ENCODE measurements at regions of chr5 and their contacts with region 1.

Region 1: DNA sequence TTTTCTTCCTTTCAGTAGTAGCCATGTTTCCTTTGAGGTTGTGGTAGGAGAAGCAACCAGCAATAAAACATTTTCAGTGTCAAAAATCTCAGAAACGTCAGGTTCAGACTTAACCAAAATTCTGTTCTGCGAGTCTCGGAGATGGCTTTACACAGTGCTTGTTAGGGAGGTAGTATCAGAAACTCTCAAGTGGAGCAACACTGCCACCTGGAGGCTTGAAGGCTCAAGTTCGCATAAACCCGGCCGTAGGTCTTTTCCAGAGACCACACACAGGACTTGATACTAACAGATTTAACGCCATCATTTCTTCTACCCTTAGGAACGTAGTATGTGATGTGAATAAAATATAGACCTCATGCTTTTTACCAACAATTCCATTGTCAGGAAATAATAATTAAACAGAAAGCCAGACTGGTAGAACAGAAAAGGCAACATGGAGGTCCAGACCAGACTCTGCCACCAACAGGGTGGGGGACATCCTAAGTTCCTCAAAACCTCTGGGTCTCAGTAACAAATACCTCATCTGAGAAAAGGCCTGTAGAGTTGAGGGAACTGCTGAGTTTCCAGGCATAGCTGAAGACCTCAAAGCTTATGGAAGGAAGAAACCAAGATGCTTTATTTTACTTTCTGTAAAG is 8.5 kb downstream of the PTGER4 start:
- DNase-seq: peak; percentile 78
- H3K4me3 ChIP-seq: peak overlapping the region; percentile 95
- H3K27ac ChIP-seq: peak overlapping the region; percentile 93
- H3K4me1 ChIP-seq: peaks cover 57% of the 10 kb centered on the region
- H3K27me3 ChIP-seq: peaks cover 17% of the 10 kb centered on the region
- CTCF ChIP-seq: peak; percentile 92

Region 2: DNA sequence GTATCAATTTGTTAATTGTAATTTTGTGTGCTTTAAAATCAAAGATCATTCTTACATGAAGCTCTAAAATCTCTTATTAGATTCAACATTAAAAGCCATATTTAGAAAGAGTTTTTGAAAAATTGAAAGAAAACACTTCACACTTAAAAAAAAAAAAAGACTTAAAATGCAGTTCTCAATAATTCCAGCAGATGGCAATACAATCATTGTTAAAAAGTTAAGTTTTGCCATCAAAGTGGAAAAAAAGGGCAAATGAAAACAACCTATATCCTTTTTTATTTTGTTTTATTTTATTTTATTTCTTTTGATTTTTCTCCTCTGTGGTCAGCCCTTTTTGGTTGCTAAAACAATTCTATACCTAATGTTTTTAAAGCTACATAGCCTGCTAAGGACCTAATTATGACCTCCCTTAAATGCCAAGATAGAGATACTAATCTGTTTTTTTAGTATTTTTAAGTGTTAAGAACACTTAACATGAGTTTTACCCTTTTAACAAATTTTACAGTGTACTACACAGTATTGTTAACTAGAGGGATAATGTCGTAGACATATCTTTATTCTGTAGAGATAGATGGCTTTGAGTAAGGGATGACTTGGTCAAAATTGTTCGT is 1109.3 kb before region 1 on chr5:
- intact Hi-C with region 1: loop called (anchors 5 kb)
- DNase-seq: no peak
- H3K4me3 ChIP-seq: no peak overlapping the region
- H3K27ac ChIP-seq: no peak overlapping the region
- H3K4me1 ChIP-seq: no peaks in the 10 kb centered on the region
- H3K27me3 ChIP-seq: peaks cover 7% of the 10 kb centered on the region
- CTCF ChIP-seq: peak; percentile 78

Region 3: DNA sequence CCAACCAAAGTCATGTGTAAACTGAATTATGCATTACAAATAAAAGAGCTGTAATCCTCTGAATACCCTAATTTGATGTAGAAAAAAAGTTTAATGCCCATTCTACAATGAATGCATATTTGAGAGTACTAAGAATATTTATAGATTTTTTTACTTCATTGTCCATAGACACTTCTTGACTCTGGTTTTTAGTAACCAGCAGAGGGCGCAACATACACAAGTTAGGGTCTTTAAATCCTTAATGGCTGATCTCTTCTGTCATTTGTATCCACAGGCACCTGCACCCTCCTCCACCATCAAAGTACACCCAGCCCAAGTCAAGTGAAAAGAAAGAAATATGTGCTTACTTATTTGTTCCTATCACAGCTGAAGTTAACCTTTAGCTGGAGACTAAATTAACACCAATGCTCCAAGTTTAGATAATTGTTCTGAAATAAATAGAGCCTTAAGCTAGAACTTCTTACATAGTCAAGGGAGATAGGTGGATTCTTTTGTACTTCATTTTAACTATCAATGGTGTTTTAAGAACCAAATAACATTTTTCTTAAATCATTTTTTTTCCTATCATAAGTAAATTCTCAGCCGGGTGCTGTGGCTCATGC is 739.3 kb before region 1 on chr5:
- intact Hi-C with region 1: loop called (anchors 2 kb)
- DNase-seq: no peak
- H3K4me3 ChIP-seq: no peak overlapping the region
- H3K27ac ChIP-seq: no peak overlapping the region
- H3K4me1 ChIP-seq: no peaks in the 10 kb centered on the region
- H3K27me3 ChIP-seq: no peaks in the 10 kb centered on the region
- CTCF ChIP-seq: peak; percentile 81

Region 4: GRCh38 chr5:40401284-40402006 is 286.8 kb before region 1 on chr5:
- intact Hi-C with region 1: no loop called
- DNase-seq: no peak
- H3K4me3 ChIP-seq: no peak overlapping the region
- H3K27ac ChIP-seq: no peak overlapping the region
- H3K4me1 ChIP-seq: peaks cover 26% of the 10 kb centered on the region
- H3K27me3 ChIP-seq: no peaks in the 10 kb centered on the region
- CTCF ChIP-seq: no peak

Measured in left ventricle myocardium inferior (tissue), 1 donor.